GM12878 (cell line): ENCODE measurements at regions of chr4 and their contacts with region 1.

Region 1: DNA sequence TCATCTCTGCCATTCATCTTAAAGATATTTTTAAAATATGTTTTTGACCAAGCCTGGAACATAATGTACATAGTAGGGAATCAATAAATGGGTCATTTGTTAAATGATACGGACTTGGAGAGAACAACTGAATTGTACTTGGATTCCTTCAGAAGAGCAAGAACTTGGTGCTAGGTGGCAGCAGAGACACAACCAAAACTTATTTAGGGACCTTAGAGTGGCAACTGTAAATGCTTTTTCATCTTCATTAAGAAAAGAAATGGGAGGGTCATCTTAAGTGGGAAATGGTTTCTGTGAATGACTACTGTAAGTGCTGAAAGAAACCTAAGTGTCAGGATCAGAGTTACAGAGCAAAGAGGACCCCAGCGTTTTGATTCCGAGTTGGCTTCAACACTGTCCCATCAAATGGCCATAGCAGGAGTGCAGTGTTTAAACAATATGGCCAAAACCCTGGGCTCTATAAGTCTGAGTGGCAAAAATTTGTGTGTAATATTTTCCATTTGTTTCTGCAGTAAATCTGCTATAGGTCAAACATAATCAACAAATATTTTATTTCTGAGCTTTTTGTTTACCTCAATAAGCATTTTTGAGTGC is 213.6 kb downstream of the PALLD start:
- DNase-seq: no peak
- ATAC-seq: peak; percentile 54
- H3K4me3 ChIP-seq: no peak overlapping the region
- H3K27ac ChIP-seq: no peak overlapping the region
- H3K4me1 ChIP-seq: no peaks in the 10 kb centered on the region
- H3K27me3 ChIP-seq: no peaks in the 10 kb centered on the region; a peak in 1 of 4 replicates
- CTCF ChIP-seq: peak; percentile 9 to 57 (median 26); a peak in 4 of 6 replicates
- EP300 ChIP-seq: no peak
- POLR2A ChIP-seq: no peak
- RAD21 ChIP-seq: peak; percentile 34

Region 2: GRCh38 chr4:168440442-168441264 is 269.8 kb before region 1 on chr4:
- CTCF ChIA-PET with region 1: no interaction called
- POLR2A ChIA-PET with region 1: no interaction called
- RAD21 ChIA-PET with region 1: no interaction called
- SMC1A ChIA-PET with region 1: no interaction called
- in situ Hi-C with region 1: no loop called
- intact Hi-C with region 1: no loop called
- DNase-seq: peak; percentile 21
- ATAC-seq: peak; percentile 86
- H3K4me3 ChIP-seq: no peak overlapping the region
- H3K27ac ChIP-seq: no peak overlapping the region
- H3K4me1 ChIP-seq: no peaks in the 10 kb centered on the region
- H3K27me3 ChIP-seq: no peaks in the 10 kb centered on the region
- CTCF ChIP-seq: no peak
- EP300 ChIP-seq: peak in 1 of 2 experiments; percentile 27; a peak in 1 of 4 replicates
- POLR2A ChIP-seq: no peak
- RAD21 ChIP-seq: no peak

Region 3: GRCh38 chr4:168557658-168558057 is 152.8 kb before region 1 on chr4:
- CTCF ChIA-PET with region 1: no interaction called
- POLR2A ChIA-PET with region 1: no interaction called
- RAD21 ChIA-PET with region 1: no interaction called
- SMC1A ChIA-PET with region 1: no interaction called
- in situ Hi-C with region 1: no loop called
- intact Hi-C with region 1: no loop called
- DNase-seq: no peak
- ATAC-seq: 0 out of 3 replicates have a peak, but pooled peaks have one; percentile 36
- H3K4me3 ChIP-seq: no peak overlapping the region
- H3K27ac ChIP-seq: no peak overlapping the region
- H3K4me1 ChIP-seq: no peaks in the 10 kb centered on the region
- H3K27me3 ChIP-seq: no peaks in the 10 kb centered on the region
- CTCF ChIP-seq: no peak
- EP300 ChIP-seq: no peak
- POLR2A ChIP-seq: no peak
- RAD21 ChIP-seq: no peak

Region 4: GRCh38 chr4:168723020-168723419 is 12.6 kb after region 1 on chr4:
- CTCF ChIA-PET with region 1: interaction called, 38 read pairs
- POLR2A ChIA-PET with region 1: interaction called, 8 read pairs
- RAD21 ChIA-PET with region 1: interaction called, 23 read pairs
- SMC1A ChIA-PET with region 1: interaction called, 30 read pairs
- in situ Hi-C with region 1: no loop called
- intact Hi-C with region 1: no loop called
- DNase-seq: no peak
- ATAC-seq: peak; percentile 63
- H3K4me3 ChIP-seq: no peak overlapping the region
- H3K27ac ChIP-seq: no peak overlapping the region
- H3K4me1 ChIP-seq: no peaks in the 10 kb centered on the region
- H3K27me3 ChIP-seq: no peaks in the 10 kb centered on the region
- CTCF ChIP-seq: no peak; a peak in 1 of 6 replicates
- EP300 ChIP-seq: peak in 1 of 2 experiments; percentile 39; a peak in 1 of 4 replicates
- POLR2A ChIP-seq: no peak
- RAD21 ChIP-seq: no peak

Region 5: GRCh38 chr4:168771251-168771650 is 60.8 kb after region 1 on chr4:
- CTCF ChIA-PET with region 1: interaction called, 10 read pairs
- POLR2A ChIA-PET with region 1: no interaction called
- RAD21 ChIA-PET with region 1: interaction called, 3 read pairs
- SMC1A ChIA-PET with region 1: interaction called, 5 read pairs
- in situ Hi-C with region 1: no loop called
- intact Hi-C with region 1: no loop called
- DNase-seq: no peak
- ATAC-seq: peak; percentile 55
- H3K4me3 ChIP-seq: no peak overlapping the region
- H3K27ac ChIP-seq: no peak overlapping the region
- H3K4me1 ChIP-seq: no peaks in the 10 kb centered on the region
- H3K27me3 ChIP-seq: no peaks in the 10 kb centered on the region
- CTCF ChIP-seq: no peak
- EP300 ChIP-seq: no peak
- POLR2A ChIP-seq: no peak
- RAD21 ChIP-seq: no peak

Region 6: GRCh38 chr4:168847771-168848511 is 137.5 kb after region 1 on chr4:
- CTCF ChIA-PET with region 1: interaction called, 4 read pairs
- POLR2A ChIA-PET with region 1: no interaction called
- RAD21 ChIA-PET with region 1: interaction called, 11 read pairs
- SMC1A ChIA-PET with region 1: interaction called, 28 read pairs
- in situ Hi-C with region 1: no loop called
- intact Hi-C with region 1: no loop called
- DNase-seq: no peak
- ATAC-seq: peak; percentile 66
- H3K4me3 ChIP-seq: no peak overlapping the region
- H3K27ac ChIP-seq: no peak overlapping the region
- H3K4me1 ChIP-seq: no peaks in the 10 kb centered on the region
- H3K27me3 ChIP-seq: no peaks in the 10 kb centered on the region
- CTCF ChIP-seq: no peak
- EP300 ChIP-seq: no peak
- POLR2A ChIP-seq: no peak
- RAD21 ChIP-seq: no peak

Region 7: DNA sequence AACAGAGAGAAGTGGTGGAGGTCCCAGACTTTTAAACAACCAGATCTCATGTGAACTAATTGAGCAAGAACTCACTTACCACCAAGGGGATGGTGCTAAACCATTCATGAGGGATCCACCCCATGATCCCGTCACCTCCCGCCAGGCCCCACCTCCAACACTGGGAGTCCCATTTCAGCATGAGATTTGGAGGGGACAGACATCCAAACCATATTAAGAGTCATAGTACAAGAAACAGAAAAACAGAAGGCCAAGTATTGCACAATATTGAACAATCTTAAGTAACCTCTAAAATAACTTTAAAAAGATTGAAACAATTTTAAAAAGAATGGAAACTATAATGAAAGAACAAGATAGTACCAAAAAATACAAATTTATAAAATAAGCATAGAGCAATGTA is 189.6 kb after region 1 on chr4:
- CTCF ChIA-PET with region 1: interaction called, 11 read pairs
- POLR2A ChIA-PET with region 1: interaction called, 6 read pairs
- RAD21 ChIA-PET with region 1: interaction called, 5 read pairs
- SMC1A ChIA-PET with region 1: interaction called, 16 read pairs
- in situ Hi-C with region 1: no loop called
- intact Hi-C with region 1: no loop called
- DNase-seq: no peak
- ATAC-seq: no peak
- H3K4me3 ChIP-seq: no peak overlapping the region
- H3K27ac ChIP-seq: no peak overlapping the region
- H3K4me1 ChIP-seq: no peaks in the 10 kb centered on the region
- H3K27me3 ChIP-seq: no peaks in the 10 kb centered on the region
- CTCF ChIP-seq: no peak
- EP300 ChIP-seq: no peak
- POLR2A ChIP-seq: no peak
- RAD21 ChIP-seq: no peak

Region 8: GRCh38 chr4:168931182-168931650 is 220.8 kb after region 1 on chr4:
- CTCF ChIA-PET with region 1: interaction called, 4 read pairs
- POLR2A ChIA-PET with region 1: no interaction called
- RAD21 ChIA-PET with region 1: no interaction called
- SMC1A ChIA-PET with region 1: interaction called, 13 read pairs
- in situ Hi-C with region 1: no loop called
- intact Hi-C with region 1: no loop called
- DNase-seq: no peak
- ATAC-seq: no peak
- H3K4me3 ChIP-seq: no peak overlapping the region
- H3K27ac ChIP-seq: no peak overlapping the region
- H3K4me1 ChIP-seq: no peaks in the 10 kb centered on the region
- H3K27me3 ChIP-seq: no peaks in the 10 kb centered on the region
- CTCF ChIP-seq: no peak
- EP300 ChIP-seq: no peak
- POLR2A ChIP-seq: no peak
- RAD21 ChIP-seq: no peak